T-cell (primary cell): ENCODE measurements at regions of chr17 and their contacts with region 1.

Region 1: GRCh38 chr17:4125552-4125951 is 17.3 kb downstream of the ZZEF1 start:
- DNase-seq: no peak
- ATAC-seq: no peak
- H3K4me3 ChIP-seq: no peak overlapping the region
- H3K4me3 Mint-ChIP-seq: no peak overlapping the region
- H3K27ac ChIP-seq: no peak overlapping the region
- H3K27ac Mint-ChIP-seq: peak overlapping the region; percentile 0 to 68
- H3K4me1 ChIP-seq: no peaks in the 10 kb centered on the region
- H3K4me1 Mint-ChIP-seq: peaks cover 27 to 35% (median 28%) of the 10 kb centered on the region in 3 donors
- H3K27me3 ChIP-seq: no peaks in the 10 kb centered on the region
- H3K27me3 Mint-ChIP-seq: no peaks in the 10 kb centered on the region

Region 2: DNA sequence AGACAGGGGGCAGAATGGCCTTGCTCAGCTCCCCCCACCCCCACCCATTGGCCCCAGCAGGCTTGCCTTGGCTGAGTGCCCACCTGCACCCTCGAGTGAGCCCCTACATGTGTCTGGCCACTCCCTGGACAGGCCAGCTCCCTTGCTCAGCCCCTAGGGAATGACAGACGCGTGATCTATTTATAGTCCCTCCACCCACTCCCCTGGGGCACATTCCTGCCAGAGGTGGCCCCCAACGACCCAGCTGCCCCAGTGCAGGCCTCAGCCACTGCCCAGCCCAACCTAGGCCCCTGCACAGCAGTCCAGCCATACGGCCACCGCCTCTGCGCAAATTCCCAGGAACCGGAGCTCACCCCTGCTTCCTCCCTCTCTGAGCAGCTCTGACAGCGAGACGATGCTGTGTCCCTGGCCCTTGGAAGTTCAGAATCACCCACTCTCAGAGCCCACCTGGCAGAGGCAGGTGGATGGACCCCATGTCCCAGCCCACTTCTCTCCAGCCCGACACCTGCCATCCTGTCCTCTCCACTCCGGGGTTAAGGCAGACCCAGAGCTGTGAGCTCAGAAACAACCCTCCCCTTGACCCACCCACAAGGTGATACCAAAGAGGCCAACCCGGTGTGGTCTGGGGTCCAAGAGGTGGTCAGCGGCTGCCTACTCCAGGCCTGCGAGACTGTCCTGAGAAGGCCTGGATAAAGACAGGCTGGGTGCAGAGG is 197.8 kb before region 1 on chr17:
- CTCF ChIA-PET with region 1: no interaction called
- POLR2A ChIA-PET with region 1: no interaction called
- DNase-seq: no peak
- ATAC-seq: no peak
- H3K4me3 ChIP-seq: no peak overlapping the region
- H3K4me3 Mint-ChIP-seq: no peak overlapping the region
- H3K27ac ChIP-seq: no peak overlapping the region
- H3K27ac Mint-ChIP-seq: peak overlapping the region in 1 of 2 donors; percentile 28
- H3K4me1 ChIP-seq: no peaks in the 10 kb centered on the region
- H3K4me1 Mint-ChIP-seq: peaks cover 0 to under 1% (median 0%) of the 10 kb centered on the region in 3 donors
- H3K27me3 ChIP-seq: no peaks in the 10 kb centered on the region
- H3K27me3 Mint-ChIP-seq: no peaks in the 10 kb centered on the region

Region 3: DNA sequence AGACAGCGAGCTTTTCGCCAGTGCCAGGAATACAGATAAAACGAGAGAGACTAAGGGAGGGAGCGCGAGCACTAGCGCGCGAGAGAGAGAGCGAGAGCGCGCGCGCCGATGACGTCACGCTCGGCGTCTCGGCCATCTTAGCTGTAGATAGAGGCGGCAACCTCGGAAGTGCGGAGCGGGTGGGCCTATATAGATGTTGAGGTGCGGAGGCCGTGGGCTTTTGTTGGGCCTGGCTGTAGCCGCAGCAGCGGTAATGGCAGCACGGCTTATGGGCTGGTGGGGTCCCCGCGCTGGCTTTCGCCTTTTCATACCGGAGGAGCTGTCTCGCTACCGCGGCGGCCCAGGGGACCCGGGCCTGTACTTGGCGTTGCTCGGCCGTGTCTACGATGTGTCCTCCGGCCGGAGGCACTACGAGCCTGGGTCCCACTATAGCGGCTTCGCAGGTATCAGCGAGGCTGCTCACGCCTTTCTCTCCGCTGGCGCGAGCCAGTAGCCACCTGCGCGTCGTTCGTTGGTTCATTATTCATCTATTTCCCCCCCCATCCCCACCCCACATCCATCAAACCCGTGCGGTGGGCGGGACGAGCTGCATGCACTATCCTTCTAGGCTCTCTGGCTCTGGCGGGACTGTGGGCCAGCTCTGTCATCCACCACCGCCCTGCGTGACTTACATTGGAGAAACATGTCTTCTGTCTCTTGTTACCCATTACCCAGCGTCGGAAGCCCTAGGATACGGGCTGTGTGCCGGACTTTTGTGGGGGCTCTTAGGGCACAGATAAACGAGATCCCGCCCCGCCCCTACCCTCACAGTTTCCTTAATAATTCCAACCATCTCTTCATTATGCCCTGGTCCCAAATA is 18.2 kb after region 1 on chr17:
- CTCF ChIA-PET with region 1: interaction called in 1 of 2 experiments, 4 read pairs
- POLR2A ChIA-PET with region 1: interaction called, 3 to 10 read pairs
- DNase-seq: peak; percentile 78 to 98 (median 91)
- ATAC-seq: peak; percentile 73 to 76 (median 74)
- H3K4me3 ChIP-seq: peak overlapping the region; percentile 85 to 93
- H3K4me3 Mint-ChIP-seq: peak overlapping the region; percentile 99
- H3K27ac ChIP-seq: peak overlapping the region; percentile 99
- H3K27ac Mint-ChIP-seq: peak overlapping the region; percentile 99 to 100
- H3K4me1 ChIP-seq: peaks cover 21 to 38% of the 10 kb centered on the region in 2 experiments
- H3K4me1 Mint-ChIP-seq: peaks cover 41 to 49% (median 47%) of the 10 kb centered on the region in 3 donors
- H3K27me3 ChIP-seq: no peaks in the 10 kb centered on the region
- H3K27me3 Mint-ChIP-seq: no peaks in the 10 kb centered on the region